Activated CD4-positive, alpha-beta memory T cell treated with anti-CD3 and anti-CD28 coated beads for 36 hours (primary cell): ENCODE measurements at regions of chr18 and their contacts with region 1.

Region 1: GRCh38 chr18:57004366-57005121 is 142.3 kb upstream of the BOD1L2 start:
- DNase-seq: no peak
- H3K4me3 Mint-ChIP-seq: no peak overlapping the region
- H3K27ac Mint-ChIP-seq: peak overlapping the region; percentile 33
- H3K4me1 Mint-ChIP-seq: peaks cover 32% of the 10 kb centered on the region
- H3K27me3 Mint-ChIP-seq: no peaks in the 10 kb centered on the region

Region 2: DNA sequence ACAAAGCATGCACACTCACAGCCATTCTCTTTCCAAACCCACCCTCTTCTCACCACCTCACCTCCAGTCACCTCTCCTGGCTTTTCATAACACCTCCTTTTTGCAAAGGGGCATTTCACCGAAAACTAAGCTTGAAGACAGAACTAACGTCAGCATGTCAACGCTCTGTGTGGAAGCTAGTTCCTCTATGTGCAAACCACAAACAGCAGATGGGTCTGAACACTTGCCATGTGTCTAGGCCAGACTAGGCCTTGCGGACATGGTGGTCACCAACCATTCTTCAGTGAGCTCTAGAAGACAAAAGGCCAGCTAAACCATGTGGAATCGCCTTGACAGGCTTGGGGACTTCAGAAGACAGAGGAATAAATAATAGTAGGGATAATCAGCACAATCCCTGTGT is 514.7 kb before region 1 on chr18:
- CTCF ChIA-PET with region 1: no interaction called
- POLR2A ChIA-PET with region 1: no interaction called
- intact Hi-C with region 1: no loop called
- DNase-seq: no peak
- H3K4me3 Mint-ChIP-seq: no peak overlapping the region
- H3K27ac Mint-ChIP-seq: no peak overlapping the region
- H3K4me1 Mint-ChIP-seq: no peaks in the 10 kb centered on the region
- H3K27me3 Mint-ChIP-seq: peaks cover 7% of the 10 kb centered on the region

Region 3: GRCh38 chr18:56748698-56749268 is 255.8 kb before region 1 on chr18:
- CTCF ChIA-PET with region 1: no interaction called
- POLR2A ChIA-PET with region 1: no interaction called
- intact Hi-C with region 1: loop called (anchors 10 kb)
- DNase-seq: no peak
- H3K4me3 Mint-ChIP-seq: no peak overlapping the region
- H3K27ac Mint-ChIP-seq: no peak overlapping the region
- H3K4me1 Mint-ChIP-seq: peaks cover 26% of the 10 kb centered on the region
- H3K27me3 Mint-ChIP-seq: no peaks in the 10 kb centered on the region

Region 4: GRCh38 chr18:56992777-56993176 is 11.8 kb before region 1 on chr18:
- CTCF ChIA-PET with region 1: no interaction called
- POLR2A ChIA-PET with region 1: no interaction called
- intact Hi-C with region 1: loop called (anchors 1 kb)
- DNase-seq: no peak
- H3K4me3 Mint-ChIP-seq: no peak overlapping the region
- H3K27ac Mint-ChIP-seq: no peak overlapping the region
- H3K4me1 Mint-ChIP-seq: peaks cover 8% of the 10 kb centered on the region
- H3K27me3 Mint-ChIP-seq: no peaks in the 10 kb centered on the region

Region 5: GRCh38 chr18:57015451-57015850 is 10.9 kb after region 1 on chr18:
- CTCF ChIA-PET with region 1: no interaction called
- POLR2A ChIA-PET with region 1: no interaction called
- intact Hi-C with region 1: loop called (anchors 1 kb)
- DNase-seq: no peak
- H3K4me3 Mint-ChIP-seq: no peak overlapping the region
- H3K27ac Mint-ChIP-seq: no peak overlapping the region
- H3K4me1 Mint-ChIP-seq: peaks cover 16% of the 10 kb centered on the region
- H3K27me3 Mint-ChIP-seq: no peaks in the 10 kb centered on the region

Region 6: GRCh38 chr18:57833443-57834101 is 829.0 kb after region 1 on chr18:
- CTCF ChIA-PET with region 1: no interaction called
- POLR2A ChIA-PET with region 1: no interaction called
- intact Hi-C with region 1: loop called (anchors 10 kb)
- DNase-seq: peak; percentile 40
- H3K4me3 Mint-ChIP-seq: peak overlapping the region; percentile 21
- H3K27ac Mint-ChIP-seq: peak overlapping the region; percentile 40
- H3K4me1 Mint-ChIP-seq: peaks cover 28% of the 10 kb centered on the region
- H3K27me3 Mint-ChIP-seq: peaks cover 29% of the 10 kb centered on the region